ENCODE measurements at regions of chr2 and their contacts with region 1.

Region 1: DNA sequence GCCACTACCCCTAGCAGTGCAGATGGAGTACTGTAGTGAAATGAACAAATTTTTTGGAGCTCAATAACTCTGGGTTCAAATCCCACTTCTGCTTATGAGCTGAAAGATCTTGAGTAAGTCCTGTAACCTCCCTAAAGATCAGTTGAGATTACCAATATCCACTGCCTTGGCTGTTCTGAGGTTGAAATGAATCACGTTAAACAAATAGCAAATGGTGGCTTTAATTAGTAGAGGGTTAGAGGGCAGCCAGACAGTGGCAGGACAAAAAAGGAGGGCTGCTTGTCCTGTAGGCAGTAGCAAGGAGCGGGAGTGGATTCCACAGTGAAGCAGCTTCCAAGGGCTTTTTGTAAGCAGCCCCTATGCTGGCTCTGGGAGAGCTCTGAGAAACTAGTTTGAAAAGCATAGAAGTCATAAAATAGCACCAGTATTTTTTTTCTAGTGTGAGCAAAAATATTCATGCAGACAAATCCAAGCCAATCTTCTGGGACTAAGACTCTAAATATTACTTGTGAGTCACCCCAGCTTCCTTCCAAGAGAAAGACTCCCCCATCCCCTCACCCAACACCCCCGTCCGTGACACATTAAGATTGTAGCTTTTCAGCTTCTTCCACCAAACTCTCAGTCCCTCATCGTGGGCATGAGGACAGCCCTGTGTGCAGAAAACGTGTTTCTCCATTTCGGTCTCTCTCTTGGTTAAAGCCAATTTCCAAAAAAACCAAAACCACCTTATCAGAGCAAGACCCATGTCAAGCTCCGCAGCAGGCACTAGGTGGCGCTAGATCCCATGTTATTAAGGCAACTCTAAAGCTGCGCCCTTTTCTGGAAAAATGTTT is 123.5 kb upstream of the LGALSL start:
- DNase-seq: peak; percentile 83

Region 2: GRCh38 chr2:64052468-64053241 is 277.8 kb before region 1 on chr2:
- intact Hi-C with region 1: loop called (anchors 1 kb)
- DNase-seq: no peak

Region 3: GRCh38 chr2:64144057-64145013 is 186.2 kb before region 1 on chr2 and contains the start of gene PELI1:
- intact Hi-C with region 1: loop called (anchors 5 kb)
- DNase-seq: peak; percentile 98
- total RNA-seq, gene PELI1: 9.0 TPM

Region 4: GRCh38 chr2:64404002-64404731 is 73.7 kb after region 1 on chr2:
- intact Hi-C with region 1: loop called (anchors 2 kb)
- DNase-seq: peak; percentile 91

Region 5: DNA sequence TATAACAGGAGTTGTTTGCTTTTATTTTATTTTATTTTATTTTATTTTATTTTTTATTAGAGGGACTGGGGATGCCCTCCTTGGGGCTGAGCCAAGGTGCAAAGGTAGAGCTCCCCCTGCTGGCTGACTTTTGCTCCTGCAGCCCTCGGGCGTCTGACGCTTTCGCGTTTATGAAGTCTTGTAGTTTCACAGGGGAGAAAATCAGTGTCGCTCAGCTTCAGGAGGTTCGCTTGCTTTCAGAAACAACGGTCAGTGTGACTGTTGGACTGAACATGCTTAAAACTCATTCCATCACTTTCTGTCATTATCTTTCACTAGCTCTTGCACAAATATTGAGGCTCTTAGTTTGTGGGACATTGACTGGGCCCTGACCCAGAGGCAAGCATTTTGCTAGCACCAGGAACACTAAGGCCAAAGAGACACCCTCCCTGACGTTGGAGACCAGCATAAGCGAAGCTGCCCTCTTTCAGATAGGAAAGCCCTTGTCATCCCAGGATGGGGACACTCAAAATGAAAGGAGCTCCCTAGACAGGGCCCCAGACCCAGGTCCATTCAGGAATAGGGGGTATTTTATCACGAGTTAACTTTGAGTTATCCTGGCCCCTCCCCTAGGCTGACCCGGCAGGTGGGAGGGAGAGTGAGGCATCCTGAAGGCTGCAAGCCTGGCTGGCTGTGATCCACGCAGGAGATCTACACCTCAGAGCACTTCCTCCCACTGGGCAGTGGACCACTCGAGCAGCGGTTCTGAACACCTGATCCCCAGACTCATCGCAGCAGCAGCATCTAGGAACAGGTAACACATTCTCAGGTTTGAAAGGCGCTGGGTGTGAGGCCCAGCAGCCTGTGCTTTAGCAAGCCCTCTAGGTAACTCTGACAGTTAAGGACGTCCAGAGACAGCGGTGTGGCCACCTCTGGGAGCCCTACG is 157.8 kb after region 1 on chr2:
- intact Hi-C with region 1: loop called (anchors 1 kb)
- DNase-seq: peak; percentile 90

Region 6: DNA sequence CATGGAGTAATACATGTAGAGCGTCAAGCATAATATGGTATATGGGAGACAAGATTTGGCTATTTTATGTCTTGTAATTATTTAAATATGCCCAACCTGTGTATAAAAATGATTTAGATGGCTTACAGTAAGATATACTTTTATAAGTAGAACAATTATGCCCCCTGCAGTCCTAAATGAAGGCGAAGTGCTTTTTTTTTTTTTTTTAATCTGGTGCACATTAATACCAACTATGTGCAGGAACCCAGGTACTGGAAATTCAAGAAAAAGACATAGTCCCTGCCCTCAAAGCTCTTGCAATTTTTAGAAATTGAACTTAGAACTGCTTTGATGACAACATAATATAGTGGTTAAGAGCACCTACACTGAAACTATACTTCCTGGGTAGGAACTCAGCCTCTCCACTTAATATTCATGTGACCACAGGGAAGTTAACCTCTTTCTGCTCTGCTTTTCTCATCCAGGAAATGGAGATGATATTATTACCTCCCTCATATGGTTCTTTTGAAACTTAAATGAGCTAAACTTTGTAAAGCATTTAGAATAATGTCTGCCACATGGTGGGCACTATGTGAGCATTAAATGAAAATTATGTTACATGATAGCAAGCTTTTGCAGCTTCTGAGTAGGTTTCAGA is 231.8 kb after region 1 on chr2:
- intact Hi-C with region 1: loop called (anchors 2 kb)
- DNase-seq: no peak

Region 7: DNA sequence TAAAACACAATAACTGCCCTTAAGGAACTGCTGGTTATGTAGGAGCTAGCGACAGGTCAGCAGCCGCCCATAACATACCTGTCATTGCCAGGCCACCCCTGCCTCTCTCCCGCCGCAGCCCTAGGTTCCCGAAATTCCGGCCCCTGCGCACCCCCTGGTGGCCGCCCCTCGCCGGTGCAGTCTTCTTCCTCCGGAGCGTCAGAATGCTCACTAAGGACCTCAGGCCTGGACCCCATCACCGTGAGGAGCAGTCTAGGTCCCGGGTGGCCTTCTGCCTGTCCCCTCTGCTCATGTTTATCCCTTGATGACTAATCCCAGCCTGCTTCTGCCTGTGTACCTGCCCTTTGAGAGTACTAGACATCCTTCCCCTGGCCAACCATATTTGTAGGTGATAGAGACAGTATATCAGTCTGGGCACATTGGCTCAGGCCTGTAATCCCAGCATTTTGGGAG is 543.0 kb after region 1 on chr2:
- intact Hi-C with region 1: loop called (anchors 5 kb)
- DNase-seq: peak; percentile 93

Measured in cardiac septum (tissue), 1 donor.